Dendritic cell treated with granulocyte-macrophage colony-stimulating factor and Interleukin-4, amounts not matched to agents 40 ng/mL and 50 ng/mL, for 4 days (primary cell): ENCODE measurements at regions of chr12 and their contacts with region 1.

Region 1: GRCh38 chr12:71415336-71416231 is 24.0 kb upstream of the LGR5 start:
- H3K4me3 Mint-ChIP-seq: no peak overlapping the region
- H3K27ac Mint-ChIP-seq: no peak overlapping the region
- H3K4me1 Mint-ChIP-seq: no peaks in the 10 kb centered on the region
- H3K27me3 Mint-ChIP-seq: no peaks in the 10 kb centered on the region

Region 2: GRCh38 chr12:71476513-71476912 is 60.9 kb after region 1 on chr12:
- intact Hi-C with region 1: no loop called
- H3K4me3 Mint-ChIP-seq: no peak overlapping the region
- H3K27ac Mint-ChIP-seq: no peak overlapping the region
- H3K4me1 Mint-ChIP-seq: no peaks in the 10 kb centered on the region
- H3K27me3 Mint-ChIP-seq: no peaks in the 10 kb centered on the region

Region 3: DNA sequence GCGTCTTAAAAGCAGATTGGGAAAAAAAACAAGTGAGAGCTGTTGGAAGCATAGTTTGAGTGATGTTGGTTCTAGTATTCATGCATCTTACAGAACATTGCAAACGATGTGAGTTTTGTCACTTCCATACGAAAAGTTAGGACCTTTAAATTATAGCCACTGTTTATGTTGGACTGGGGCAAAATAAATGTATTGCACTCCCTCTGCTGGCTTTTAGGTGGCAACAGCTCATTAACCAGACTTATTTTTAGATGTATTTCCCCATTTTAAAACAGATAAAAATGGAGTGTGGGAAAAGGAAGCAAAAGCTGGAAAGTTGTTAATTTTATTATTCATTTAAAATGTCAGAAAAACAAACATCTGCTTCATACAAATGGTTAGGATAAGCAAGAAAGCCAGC is 135.9 kb after region 1 on chr12:
- intact Hi-C with region 1: loop called (anchors 5 kb)
- H3K4me3 Mint-ChIP-seq: no peak overlapping the region
- H3K27ac Mint-ChIP-seq: no peak overlapping the region
- H3K4me1 Mint-ChIP-seq: no peaks in the 10 kb centered on the region
- H3K27me3 Mint-ChIP-seq: no peaks in the 10 kb centered on the region

Region 4: GRCh38 chr12:71562676-71563595 is 147.4 kb after region 1 on chr12:
- intact Hi-C with region 1: no loop called
- H3K4me3 Mint-ChIP-seq: no peak overlapping the region
- H3K27ac Mint-ChIP-seq: no peak overlapping the region
- H3K4me1 Mint-ChIP-seq: no peaks in the 10 kb centered on the region
- H3K27me3 Mint-ChIP-seq: no peaks in the 10 kb centered on the region

Region 5: GRCh38 chr12:71636704-71637115 is 221.1 kb after region 1 on chr12:
- intact Hi-C with region 1: loop called (anchors 5 kb)
- H3K4me3 Mint-ChIP-seq: no peak overlapping the region
- H3K27ac Mint-ChIP-seq: no peak overlapping the region
- H3K4me1 Mint-ChIP-seq: peaks cover 11% of the 10 kb centered on the region
- H3K27me3 Mint-ChIP-seq: no peaks in the 10 kb centered on the region

Region 6: DNA sequence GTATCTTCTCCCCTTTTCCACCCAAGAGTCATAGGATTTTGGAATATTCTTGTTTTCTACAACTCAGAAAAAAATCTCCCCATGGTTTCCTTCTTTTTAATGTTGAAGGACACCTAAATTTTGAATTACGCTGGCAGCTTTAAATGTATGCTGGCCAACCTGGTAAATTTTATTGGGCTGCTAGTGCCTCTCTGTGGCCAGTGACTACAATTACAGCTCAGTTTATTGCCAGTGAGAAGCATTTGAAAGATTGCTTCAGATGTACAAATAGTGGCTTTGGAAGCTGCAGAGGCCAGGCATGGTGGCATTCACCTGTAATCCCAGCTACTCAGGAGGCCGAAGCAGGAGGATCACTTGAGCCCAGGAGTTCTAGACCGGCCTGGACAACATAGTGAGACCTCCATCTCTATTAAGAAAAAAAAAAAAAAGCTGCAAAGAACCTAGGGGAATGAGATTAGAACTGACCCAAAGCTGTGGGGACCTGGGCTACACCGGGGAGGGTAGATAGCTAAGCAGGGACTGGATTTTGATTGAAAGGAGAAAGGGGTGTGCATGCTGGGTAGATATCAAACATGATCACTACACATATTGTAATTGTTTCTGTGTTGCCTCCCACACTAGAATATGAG is 331.5 kb after region 1 on chr12:
- intact Hi-C with region 1: loop called (anchors 1 kb)
- H3K4me3 Mint-ChIP-seq: no peak overlapping the region
- H3K27ac Mint-ChIP-seq: no peak overlapping the region
- H3K4me1 Mint-ChIP-seq: no peaks in the 10 kb centered on the region
- H3K27me3 Mint-ChIP-seq: peaks cover 11% of the 10 kb centered on the region